ENCODE measurements at regions of chr4 and their contacts with region 1.

Region 1: DNA sequence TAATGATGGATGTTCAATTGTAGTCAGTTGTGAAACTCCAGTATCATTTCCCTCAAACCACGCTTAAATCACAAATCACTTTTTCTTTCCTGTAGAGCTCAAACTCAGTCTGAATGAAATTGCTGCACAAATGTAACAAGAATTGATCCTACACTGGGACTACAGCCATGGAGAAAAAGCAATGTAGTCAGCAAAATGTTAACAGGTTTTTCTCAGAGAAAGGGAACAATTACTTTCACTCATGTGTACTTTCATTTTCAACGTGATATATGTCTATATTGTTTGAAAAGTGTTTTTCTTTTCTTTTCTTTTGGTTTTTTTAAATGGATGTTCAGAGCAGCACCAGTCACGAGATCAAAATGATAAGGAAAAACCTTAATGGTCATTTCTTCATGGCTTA is 22.7 kb downstream of the SDAD1 start:
- DNase-seq: no peak
- ATAC-seq: no peak
- H3K4me3 ChIP-seq: no peak overlapping the region
- H3K4me3 Mint-ChIP-seq: no peak overlapping the region
- H3K27ac ChIP-seq: no peak overlapping the region
- H3K27ac Mint-ChIP-seq: no peak overlapping the region
- H3K4me1 ChIP-seq: no peaks in the 10 kb centered on the region
- H3K4me1 Mint-ChIP-seq: no peaks in the 10 kb centered on the region
- H3K27me3 ChIP-seq: no peaks in the 10 kb centered on the region
- H3K27me3 Mint-ChIP-seq: no peaks in the 10 kb centered on the region
- CTCF ChIP-seq: no peak

Region 2: GRCh38 chr4:75916091-75916661 is 51.9 kb before region 1 on chr4:
- CTCF ChIA-PET with region 1: no interaction called
- POLR2A ChIA-PET with region 1: interaction called, 5 read pairs
- intact Hi-C with region 1: loop called in 1 of 2 experiments (anchors 10 kb)
- DNase-seq: peak in 4 of 9 experiments; percentile 8 to 65 (median 37)
- ATAC-seq: peak; percentile 67
- H3K4me3 ChIP-seq: no peak overlapping the region
- H3K4me3 Mint-ChIP-seq: no peak overlapping the region
- H3K27ac ChIP-seq: no peak overlapping the region
- H3K27ac Mint-ChIP-seq: no peak overlapping the region
- H3K4me1 ChIP-seq: no peaks in the 10 kb centered on the region
- H3K4me1 Mint-ChIP-seq: no peaks in the 10 kb centered on the region
- H3K27me3 ChIP-seq: no peaks in the 10 kb centered on the region
- H3K27me3 Mint-ChIP-seq: no peaks in the 10 kb centered on the region
- CTCF ChIP-seq: peak; percentile 72